ENCODE measurements at regions of chr12 and their contacts with region 1.

Region 1: GRCh38 chr12:74689071-74689655 is 151.5 kb downstream of the ATXN7L3B start:
- DNase-seq: peak in 6 of 9 donors; percentile 1 to 41 (median 6)
- ATAC-seq: no peak
- H3K4me3 ChIP-seq: no peak overlapping the region
- H3K4me3 Mint-ChIP-seq: no peak overlapping the region
- H3K27ac ChIP-seq: no peak overlapping the region
- H3K27ac Mint-ChIP-seq: no peak overlapping the region
- H3K4me1 ChIP-seq: no peaks in the 10 kb centered on the region
- H3K4me1 Mint-ChIP-seq: no peaks in the 10 kb centered on the region
- H3K27me3 ChIP-seq: no peaks in the 10 kb centered on the region
- H3K27me3 Mint-ChIP-seq: no peaks in the 10 kb centered on the region

Region 2: DNA sequence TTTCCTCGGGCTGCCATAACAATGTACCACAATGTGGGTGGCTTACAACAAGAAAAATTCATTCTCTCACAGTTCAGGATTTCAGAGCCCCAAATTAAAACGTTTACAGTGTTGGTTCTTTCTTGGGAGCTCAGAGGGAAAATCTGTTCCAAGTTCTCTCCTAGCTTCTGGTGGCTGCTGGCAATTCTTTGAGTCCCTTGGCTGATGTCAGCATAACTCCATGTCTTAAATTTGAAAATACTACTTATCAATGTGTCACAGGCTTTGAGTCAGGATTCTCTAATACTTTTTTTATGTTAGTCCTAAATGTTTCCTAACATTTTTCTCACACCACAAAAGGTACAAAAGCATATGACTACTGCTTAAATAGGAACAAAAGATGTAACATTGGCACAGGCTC is 350.0 kb before region 1 on chr12:
- CTCF ChIA-PET with region 1: no interaction called
- POLR2A ChIA-PET with region 1: no interaction called
- intact Hi-C with region 1: no loop called
- DNase-seq: no peak
- ATAC-seq: no peak
- H3K4me3 ChIP-seq: no peak overlapping the region
- H3K4me3 Mint-ChIP-seq: no peak overlapping the region
- H3K27ac ChIP-seq: no peak overlapping the region
- H3K27ac Mint-ChIP-seq: no peak overlapping the region
- H3K4me1 ChIP-seq: no peaks in the 10 kb centered on the region
- H3K4me1 Mint-ChIP-seq: no peaks in the 10 kb centered on the region
- H3K27me3 ChIP-seq: no peaks in the 10 kb centered on the region
- H3K27me3 Mint-ChIP-seq: no peaks in the 10 kb centered on the region

Region 3: DNA sequence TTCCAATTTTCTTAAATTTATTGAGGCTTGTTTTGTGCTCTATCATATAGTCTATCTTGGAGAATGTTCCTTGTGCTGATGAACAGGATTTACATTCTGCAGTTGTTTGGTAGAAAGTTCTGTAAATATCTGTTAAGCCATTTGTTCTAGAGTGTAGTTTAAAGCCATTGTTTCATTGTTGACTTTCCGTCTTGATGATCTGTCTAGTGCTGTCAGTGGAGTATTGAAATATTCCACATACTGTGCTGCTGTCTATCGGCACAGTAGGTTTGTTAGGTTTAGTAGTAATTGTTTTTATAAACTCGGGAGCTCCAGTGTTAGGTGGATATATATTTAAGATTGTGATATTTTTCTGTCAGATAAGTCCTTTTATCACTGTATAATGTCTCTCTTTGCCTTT is 70.6 kb after region 1 on chr12:
- CTCF ChIA-PET with region 1: no interaction called
- POLR2A ChIA-PET with region 1: no interaction called
- intact Hi-C with region 1: no loop called
- DNase-seq: no peak
- ATAC-seq: no peak
- H3K4me3 ChIP-seq: no peak overlapping the region
- H3K4me3 Mint-ChIP-seq: no peak overlapping the region
- H3K27ac ChIP-seq: no peak overlapping the region
- H3K27ac Mint-ChIP-seq: no peak overlapping the region
- H3K4me1 ChIP-seq: no peaks in the 10 kb centered on the region
- H3K4me1 Mint-ChIP-seq: no peaks in the 10 kb centered on the region
- H3K27me3 ChIP-seq: no peaks in the 10 kb centered on the region
- H3K27me3 Mint-ChIP-seq: peaks cover 0 to 10% (median 0%) of the 10 kb centered on the region in 5 donors

Region 4: DNA sequence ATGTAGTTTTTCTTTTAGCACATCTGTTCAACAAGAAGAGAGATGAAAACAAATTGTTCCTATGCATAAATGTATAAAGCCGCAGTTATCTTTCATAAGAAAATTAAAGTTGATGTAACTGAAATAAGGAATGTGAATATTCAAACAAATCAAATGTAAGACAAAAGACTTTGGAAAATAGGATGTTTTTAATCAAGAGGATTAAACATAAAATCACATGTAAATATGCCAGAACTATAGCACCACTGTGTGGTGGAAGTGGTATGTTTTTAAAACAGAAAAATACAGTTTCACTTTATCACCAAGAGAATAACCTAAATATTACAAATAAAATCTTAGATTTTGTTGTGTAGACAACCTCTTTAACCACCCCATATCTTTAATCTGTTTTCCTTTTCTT is 600.6 kb after region 1 on chr12:
- CTCF ChIA-PET with region 1: no interaction called
- POLR2A ChIA-PET with region 1: no interaction called
- intact Hi-C with region 1: loop called in 1 of 2 experiments (anchors 5 kb)
- DNase-seq: peak in 1 of 9 donors; percentile 3
- ATAC-seq: no peak
- H3K4me3 ChIP-seq: no peak overlapping the region
- H3K4me3 Mint-ChIP-seq: no peak overlapping the region
- H3K27ac ChIP-seq: no peak overlapping the region
- H3K27ac Mint-ChIP-seq: no peak overlapping the region
- H3K4me1 ChIP-seq: no peaks in the 10 kb centered on the region
- H3K4me1 Mint-ChIP-seq: no peaks in the 10 kb centered on the region
- H3K27me3 ChIP-seq: no peaks in the 10 kb centered on the region
- H3K27me3 Mint-ChIP-seq: peaks cover 0 to 3% (median 0%) of the 10 kb centered on the region in 5 donors

Region 5: DNA sequence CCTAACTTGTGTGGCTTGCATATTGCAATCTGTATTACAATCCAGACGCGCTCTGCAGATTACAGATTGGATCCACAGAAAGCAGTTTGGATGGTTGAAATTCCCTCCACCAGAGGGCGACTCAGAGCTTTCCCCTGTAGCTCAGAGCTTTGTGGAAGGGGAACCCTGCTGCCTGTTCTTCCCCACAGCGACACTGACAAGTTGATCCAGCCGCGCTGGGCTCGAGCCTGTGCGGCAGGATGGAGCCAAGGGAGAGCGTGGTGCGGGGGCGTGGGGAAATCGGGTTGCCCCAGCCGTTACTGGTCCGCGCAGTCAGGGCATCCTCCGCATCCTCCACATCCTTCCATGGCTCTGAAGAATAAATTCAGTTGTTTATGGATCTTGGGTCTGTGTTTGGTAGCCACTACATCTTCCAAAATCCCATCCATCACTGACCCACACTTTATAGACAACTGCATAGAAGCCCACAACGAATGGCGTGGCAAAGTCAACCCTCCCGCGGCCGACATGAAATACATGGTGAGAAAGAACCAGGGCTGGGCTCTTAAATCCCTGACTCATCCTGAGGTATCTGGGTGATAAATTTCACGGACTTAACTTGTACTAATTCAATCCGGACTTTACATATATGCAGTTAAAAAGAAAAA is 645.3 kb after region 1 on chr12 and contains the start of gene GLIPR1L1:
- CTCF ChIA-PET with region 1: no interaction called
- POLR2A ChIA-PET with region 1: no interaction called
- intact Hi-C with region 1: loop called in 1 of 2 experiments (anchors 5 kb)
- DNase-seq: peak; percentile 58 to 79 (median 74)
- ATAC-seq: peak; percentile 91
- H3K4me3 ChIP-seq: no peak within 1 kb of the TSS
- H3K4me3 Mint-ChIP-seq: peak within 1 kb of the TSS; percentile 18 to 80 (median 74)
- H3K27ac ChIP-seq: no peak within 1 kb of the TSS
- H3K27ac Mint-ChIP-seq: peak within 1 kb of the TSS in 1 of 9 donors; percentile 3
- H3K4me1 ChIP-seq: peaks cover 0 to 5% of the 10 kb centered on the region in 2 donors
- H3K4me1 Mint-ChIP-seq: peaks cover 11 to 29% (median 18%) of the 10 kb centered on the region in 7 donors
- H3K27me3 ChIP-seq: peaks cover 0 to 6% of the 10 kb centered on the region in 2 donors
- H3K27me3 Mint-ChIP-seq: peaks cover 16 to 56% (median 31%) of the 10 kb centered on the region in 5 donors
- total RNA-seq, gene GLIPR1L1: not detected

Region 6: DNA sequence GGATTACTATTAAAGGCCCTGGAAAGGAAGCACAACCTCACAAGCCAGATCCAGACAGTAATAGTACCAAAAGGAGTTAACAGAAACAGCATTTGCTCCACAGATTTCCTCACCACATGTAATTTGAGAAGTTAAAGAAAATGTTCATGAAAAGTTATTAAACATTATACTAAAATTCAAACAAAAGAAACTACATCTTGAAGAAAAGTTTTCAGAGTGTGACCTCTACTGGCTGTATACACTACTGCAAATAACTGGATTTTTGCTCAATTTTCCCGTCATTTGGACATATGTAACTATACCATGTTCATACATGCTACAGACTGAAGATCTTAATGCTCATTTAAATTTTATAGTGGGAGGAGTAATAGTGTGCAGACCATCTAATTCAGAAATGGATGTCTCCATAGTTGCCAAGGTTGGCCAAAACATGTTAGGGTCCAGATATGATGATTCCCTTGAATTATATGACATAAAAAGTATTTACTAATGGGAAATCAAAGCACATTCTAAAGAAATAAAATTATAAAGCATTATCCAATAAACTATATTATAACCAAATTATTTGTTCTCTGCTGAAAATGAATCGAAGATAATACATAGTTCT is 816.6 kb after region 1 on chr12:
- CTCF ChIA-PET with region 1: no interaction called
- POLR2A ChIA-PET with region 1: no interaction called
- intact Hi-C with region 1: loop called in 1 of 2 experiments (anchors 5 kb)
- DNase-seq: peak in 4 of 9 donors; percentile 18 to 42 (median 29)
- ATAC-seq: peak; percentile 75
- H3K4me3 ChIP-seq: no peak overlapping the region
- H3K4me3 Mint-ChIP-seq: no peak overlapping the region
- H3K27ac ChIP-seq: no peak overlapping the region
- H3K27ac Mint-ChIP-seq: peak overlapping the region in 4 of 9 donors; percentile 0 to 71 (median 5)
- H3K4me1 ChIP-seq: peaks cover 12 to 13% of the 10 kb centered on the region in 2 donors
- H3K4me1 Mint-ChIP-seq: peaks cover 14 to 38% (median 32%) of the 10 kb centered on the region in 7 donors
- H3K27me3 ChIP-seq: no peaks in the 10 kb centered on the region
- H3K27me3 Mint-ChIP-seq: no peaks in the 10 kb centered on the region

Measured in naive thymus-derived CD4-positive, alpha-beta T cell (primary cell).